Activated CD4-positive, alpha-beta T cell treated with anti-CD3 and anti-CD28 coated beads for 36 hours (primary cell): ENCODE measurements at regions of chr6 and their contacts with region 1.

Region 1: GRCh38 chr6:158972241-158973233 is 27.5 kb downstream of the RSPH3 start:
- DNase-seq: no peak
- ATAC-seq: peak; percentile 51
- H3K4me3 Mint-ChIP-seq: no peak overlapping the region
- H3K27ac Mint-ChIP-seq: no peak overlapping the region
- H3K4me1 Mint-ChIP-seq: no peaks in the 10 kb centered on the region
- H3K27me3 Mint-ChIP-seq: no peaks in the 10 kb centered on the region

Region 2: GRCh38 chr6:158220786-158221442 is 751.6 kb before region 1 on chr6:
- CTCF ChIA-PET with region 1: no interaction called
- POLR2A ChIA-PET with region 1: no interaction called
- intact Hi-C with region 1: loop called in 1 of 2 experiments (anchors 5 kb)
- DNase-seq: peak; percentile 86
- ATAC-seq: peak; percentile 97
- H3K4me3 Mint-ChIP-seq: no peak overlapping the region
- H3K27ac Mint-ChIP-seq: no peak overlapping the region
- H3K4me1 Mint-ChIP-seq: peaks cover 4% of the 10 kb centered on the region
- H3K27me3 Mint-ChIP-seq: peaks cover 1% of the 10 kb centered on the region

Region 3: GRCh38 chr6:158684311-158684710 is 288.2 kb before region 1 on chr6:
- CTCF ChIA-PET with region 1: no interaction called
- POLR2A ChIA-PET with region 1: no interaction called
- intact Hi-C with region 1: no loop called
- DNase-seq: no peak
- ATAC-seq: peak; percentile 19
- H3K4me3 Mint-ChIP-seq: no peak overlapping the region
- H3K27ac Mint-ChIP-seq: no peak overlapping the region
- H3K4me1 Mint-ChIP-seq: peaks cover 40% of the 10 kb centered on the region
- H3K27me3 Mint-ChIP-seq: no peaks in the 10 kb centered on the region

Region 4: DNA sequence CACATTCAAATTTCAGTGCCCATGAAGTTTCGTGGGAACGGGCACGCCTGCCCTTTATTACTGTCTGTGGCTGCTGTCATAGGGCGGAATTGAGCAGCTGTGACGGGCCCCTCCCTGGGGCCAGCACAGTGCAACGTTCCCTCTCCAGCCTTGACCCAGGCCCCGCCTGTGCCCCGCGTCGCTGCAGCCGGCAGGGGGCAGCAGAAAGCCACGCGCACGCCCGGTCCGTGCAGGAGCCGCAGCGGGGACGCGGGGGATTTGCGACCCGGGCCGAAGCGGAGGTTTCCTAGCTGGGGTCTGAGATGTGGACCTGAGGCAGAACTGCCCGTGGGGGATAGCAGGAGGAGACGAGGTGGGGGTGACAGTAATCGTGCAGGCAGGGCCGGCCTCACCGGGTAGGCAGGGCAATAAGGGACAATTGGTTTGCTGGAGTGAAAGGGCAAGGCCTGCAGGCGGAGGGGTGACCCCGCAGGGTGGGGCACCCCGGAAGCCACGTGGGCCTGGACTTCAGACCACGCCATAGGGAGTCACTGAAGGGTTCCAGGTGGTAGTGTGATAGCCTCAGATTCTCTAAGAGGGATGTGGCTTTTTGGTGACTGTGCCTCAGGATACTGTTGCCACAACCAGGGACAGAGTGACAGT is 268.2 kb before region 1 on chr6:
- CTCF ChIA-PET with region 1: interaction called, 16 read pairs
- POLR2A ChIA-PET with region 1: no interaction called
- intact Hi-C with region 1: loop called (anchors 1 kb)
- DNase-seq: peak; percentile 87
- ATAC-seq: peak; percentile 93
- H3K4me3 Mint-ChIP-seq: peak overlapping the region; percentile 45
- H3K27ac Mint-ChIP-seq: no peak overlapping the region
- H3K4me1 Mint-ChIP-seq: peaks cover 13% of the 10 kb centered on the region
- H3K27me3 Mint-ChIP-seq: no peaks in the 10 kb centered on the region

Region 5: GRCh38 chr6:158769771-158770432 is 202.6 kb before region 1 on chr6:
- CTCF ChIA-PET with region 1: interaction called, 7 read pairs
- POLR2A ChIA-PET with region 1: no interaction called
- intact Hi-C with region 1: loop called (anchors 2 to 5 kb)
- DNase-seq: no peak
- ATAC-seq: no peak
- H3K4me3 Mint-ChIP-seq: no peak overlapping the region
- H3K27ac Mint-ChIP-seq: peak overlapping the region; percentile 70
- H3K4me1 Mint-ChIP-seq: peaks cover 44% of the 10 kb centered on the region
- H3K27me3 Mint-ChIP-seq: no peaks in the 10 kb centered on the region

Region 6: DNA sequence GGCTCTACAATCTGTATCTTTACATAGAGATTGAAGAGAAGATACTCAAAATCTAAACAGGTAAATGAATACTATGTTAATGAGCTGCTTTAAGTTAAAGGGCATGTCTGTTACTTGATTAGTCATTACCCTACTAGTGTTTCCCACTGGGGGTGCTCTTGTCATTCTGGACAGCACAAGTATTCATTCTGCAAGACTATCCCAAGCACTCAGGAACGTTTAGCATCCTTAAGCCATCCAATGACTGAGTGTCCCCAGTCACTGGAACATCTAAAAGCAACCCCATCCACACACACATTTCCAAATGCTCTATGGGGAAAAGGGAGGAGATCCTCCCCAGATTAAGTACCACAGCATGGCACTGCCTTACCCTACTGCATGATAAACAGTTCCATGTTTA is 179.1 kb before region 1 on chr6:
- CTCF ChIA-PET with region 1: interaction called, 27 read pairs
- POLR2A ChIA-PET with region 1: no interaction called
- intact Hi-C with region 1: loop called (anchors 1 to 2 kb)
- DNase-seq: no peak
- ATAC-seq: peak; percentile 74
- H3K4me3 Mint-ChIP-seq: no peak overlapping the region
- H3K27ac Mint-ChIP-seq: peak overlapping the region; percentile 53
- H3K4me1 Mint-ChIP-seq: peaks cover 87% of the 10 kb centered on the region
- H3K27me3 Mint-ChIP-seq: no peaks in the 10 kb centered on the region

Region 7: DNA sequence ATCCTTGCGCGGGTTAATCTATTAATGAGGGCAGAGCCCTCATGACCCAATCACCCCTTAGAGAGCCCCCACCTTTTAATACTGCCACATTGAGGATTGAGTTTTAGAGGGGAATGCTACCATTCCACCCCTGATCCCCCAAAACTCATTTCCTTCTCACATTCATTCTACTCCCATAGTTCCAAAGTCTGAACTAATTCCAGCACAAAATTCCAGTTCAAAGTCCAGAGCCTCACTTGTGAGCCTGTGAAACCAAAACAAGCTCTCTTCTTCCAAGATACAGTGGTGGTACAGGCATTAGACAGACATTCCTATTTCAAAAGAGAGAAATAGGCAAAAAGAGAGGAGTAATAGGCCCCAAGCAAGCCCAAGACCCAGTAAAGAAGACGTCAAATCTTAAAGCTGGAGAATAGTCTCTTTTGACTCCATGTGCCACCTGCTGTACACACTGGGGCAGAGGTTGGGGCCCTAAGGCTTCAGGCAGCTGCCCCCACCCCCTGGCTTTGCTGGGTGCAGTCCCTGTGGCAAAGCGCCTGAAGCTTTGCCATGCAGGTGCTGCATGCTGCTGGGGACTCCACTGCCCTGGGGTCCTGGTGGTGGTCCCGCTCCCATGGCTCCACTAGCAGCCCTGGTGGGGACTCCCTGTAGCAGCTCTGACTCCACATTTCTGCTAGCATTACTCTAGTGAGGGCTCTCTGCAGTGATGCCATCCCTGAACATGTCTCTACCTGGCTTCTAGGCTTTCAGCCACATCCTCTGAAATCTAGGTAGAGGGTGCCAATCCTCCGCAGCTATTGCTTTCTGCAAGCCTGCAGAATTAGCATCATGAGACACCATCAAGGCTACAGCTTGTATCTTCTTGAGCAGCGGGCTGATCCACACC is 13.8 kb before region 1 on chr6:
- CTCF ChIA-PET with region 1: interaction called, 11 read pairs
- POLR2A ChIA-PET with region 1: no interaction called
- intact Hi-C with region 1: no loop called
- DNase-seq: peak; percentile 40
- ATAC-seq: peak; percentile 44
- H3K4me3 Mint-ChIP-seq: no peak overlapping the region
- H3K27ac Mint-ChIP-seq: no peak overlapping the region
- H3K4me1 Mint-ChIP-seq: peaks cover 8% of the 10 kb centered on the region
- H3K27me3 Mint-ChIP-seq: no peaks in the 10 kb centered on the region